ENCODE measurements at regions of chr10 and their contacts with region 1.

Region 1: DNA sequence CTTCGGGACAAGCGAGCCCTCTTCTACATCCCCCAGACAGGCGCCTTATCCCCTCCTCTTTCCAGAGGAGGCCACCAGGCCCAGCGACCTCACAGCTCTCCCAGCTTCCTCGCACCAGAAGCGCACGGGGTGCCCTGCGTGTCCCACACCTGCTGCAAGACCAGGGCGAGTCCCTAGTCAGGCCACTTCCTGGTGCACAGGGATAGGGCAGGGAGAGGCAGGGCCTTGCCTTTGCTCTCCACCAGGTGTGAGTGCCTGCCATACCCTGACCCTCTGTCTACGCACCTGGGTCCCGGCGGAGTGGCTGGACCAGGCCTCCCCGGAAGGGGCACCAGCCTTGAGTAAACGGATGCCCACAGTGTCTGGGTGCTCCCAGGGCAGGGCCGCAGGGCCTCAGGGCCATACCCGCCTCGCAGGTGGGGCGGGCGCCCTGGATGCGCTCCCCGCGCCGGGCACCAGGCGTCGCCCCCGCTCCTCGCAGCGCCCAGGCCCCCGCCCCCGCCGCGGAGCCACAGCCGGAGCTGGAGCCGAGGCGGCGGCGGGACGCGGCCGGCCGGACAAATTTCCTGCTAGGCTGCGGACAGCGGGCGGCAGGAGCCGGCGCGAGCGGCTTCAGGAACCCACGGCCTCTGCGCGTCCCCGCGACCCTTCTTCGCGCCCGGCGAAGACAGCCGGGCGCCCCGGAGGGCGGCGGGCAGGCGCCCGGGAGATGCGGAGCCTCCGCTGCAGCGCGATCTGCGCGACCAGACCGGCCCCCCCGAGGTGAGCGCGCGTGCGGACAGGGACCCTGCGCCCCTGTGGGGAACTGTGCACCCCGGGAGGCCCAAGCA is at the start of gene PTPRE:
- DNase-seq: peak; percentile 84 to 92
- ATAC-seq: peak; percentile 93
- H3K4me3 ChIP-seq: peak within 1 kb of the TSS; percentile 61 to 81
- H3K27ac ChIP-seq: peak within 1 kb of the TSS; percentile 20 to 59
- H3K4me1 ChIP-seq: no peaks in the 10 kb centered on the region
- H3K27me3 ChIP-seq: no peaks in the 10 kb centered on the region
- total RNA-seq, gene PTPRE: 41.3 to 46.0 TPM

Region 2: GRCh38 chr10:127832501-127832900 is 74.3 kb before region 1 on chr10:
- intact Hi-C with region 1: no loop called
- DNase-seq: no peak
- ATAC-seq: no peak
- H3K4me3 ChIP-seq: no peak overlapping the region
- H3K27ac ChIP-seq: no peak overlapping the region
- H3K4me1 ChIP-seq: no peaks in the 10 kb centered on the region
- H3K27me3 ChIP-seq: no peaks in the 10 kb centered on the region

Region 3: GRCh38 chr10:127990846-127991542 is 84.2 kb after region 1 on chr10:
- intact Hi-C with region 1: loop called (anchors 5 kb)
- DNase-seq: no peak
- ATAC-seq: peak; percentile 72
- H3K4me3 ChIP-seq: no peak overlapping the region
- H3K27ac ChIP-seq: peak overlapping the region in 1 of 2 donors; percentile 69
- H3K4me1 ChIP-seq: peaks cover 0 to 3% of the 10 kb centered on the region in 2 donors
- H3K27me3 ChIP-seq: no peaks in the 10 kb centered on the region

Region 4: GRCh38 chr10:128011175-128011979 is 104.6 kb after region 1 on chr10:
- intact Hi-C with region 1: loop called (anchors 1 to 2 kb)
- DNase-seq: peak; percentile 87 to 95
- ATAC-seq: peak; percentile 92
- H3K4me3 ChIP-seq: no peak overlapping the region
- H3K27ac ChIP-seq: no peak overlapping the region
- H3K4me1 ChIP-seq: no peaks in the 10 kb centered on the region
- H3K27me3 ChIP-seq: no peaks in the 10 kb centered on the region

Region 5: GRCh38 chr10:128833671-128834070 is 926.9 kb after region 1 on chr10:
- intact Hi-C with region 1: no loop called
- DNase-seq: no peak
- ATAC-seq: no peak
- H3K4me3 ChIP-seq: no peak overlapping the region
- H3K27ac ChIP-seq: no peak overlapping the region
- H3K4me1 ChIP-seq: no peaks in the 10 kb centered on the region
- H3K27me3 ChIP-seq: no peaks in the 10 kb centered on the region